Right ventricle myocardium inferior (tissue), 1 donor: ENCODE measurements at regions of chr3 and their contacts with region 1.

Region 1: GRCh38 chr3:187291001-187291511 is 481 bp downstream of the MASP1 start:
- DNase-seq: no peak
- ATAC-seq: peak; percentile 41

Region 2: DNA sequence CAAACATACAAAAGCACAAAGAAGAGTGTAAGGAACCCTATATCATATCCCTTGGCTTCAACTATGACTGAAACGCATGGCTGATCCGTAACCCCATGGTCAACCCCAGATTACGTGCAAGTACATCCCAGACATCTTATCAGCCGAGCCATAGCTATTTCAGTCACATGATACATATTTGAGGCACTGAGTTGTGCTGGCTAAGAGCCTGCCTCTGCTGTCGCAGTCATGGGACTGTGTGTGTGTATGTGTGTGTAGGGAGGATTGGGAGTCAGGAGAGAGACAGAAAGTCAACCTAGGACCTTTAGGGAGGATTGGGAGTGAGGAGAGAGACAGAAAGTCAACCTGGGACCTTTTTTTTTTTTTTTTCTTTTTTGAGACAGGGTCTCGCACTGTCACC is 352.3 kb before region 1 on chr3:
- intact Hi-C with region 1: no loop called
- DNase-seq: no peak
- ATAC-seq: peak; percentile 81

Region 3: DNA sequence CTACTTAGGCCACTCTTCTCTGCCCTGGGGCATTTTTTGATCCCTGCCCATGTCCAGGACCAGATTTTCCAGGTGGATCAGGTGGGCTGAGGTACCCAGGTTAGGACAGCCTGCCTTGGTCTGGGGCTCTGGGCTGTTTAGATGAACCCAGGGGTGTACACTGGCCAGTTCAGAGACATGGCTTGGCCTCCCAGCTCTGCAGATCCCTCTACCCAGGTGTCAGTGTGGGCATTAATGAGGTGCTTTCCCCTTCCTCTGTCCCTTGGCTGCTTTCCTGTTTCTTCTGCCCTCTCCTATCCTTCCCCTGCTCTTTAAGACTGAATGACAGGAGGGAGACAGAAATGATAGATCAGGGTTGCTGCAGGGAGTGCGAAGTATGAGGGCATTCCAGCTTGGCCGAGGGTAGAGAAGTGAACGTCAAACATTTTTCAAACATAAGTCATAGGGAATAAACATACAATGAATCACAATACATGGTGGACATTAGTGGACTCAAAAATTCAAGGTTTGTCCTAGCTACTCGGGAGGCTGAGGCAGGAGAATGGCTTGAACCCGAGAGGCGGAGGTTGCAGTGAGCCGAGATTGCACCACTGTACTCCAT is 63.3 kb before region 1 on chr3:
- intact Hi-C with region 1: loop called (anchors 5 kb)
- DNase-seq: no peak
- ATAC-seq: no peak

Region 4: DNA sequence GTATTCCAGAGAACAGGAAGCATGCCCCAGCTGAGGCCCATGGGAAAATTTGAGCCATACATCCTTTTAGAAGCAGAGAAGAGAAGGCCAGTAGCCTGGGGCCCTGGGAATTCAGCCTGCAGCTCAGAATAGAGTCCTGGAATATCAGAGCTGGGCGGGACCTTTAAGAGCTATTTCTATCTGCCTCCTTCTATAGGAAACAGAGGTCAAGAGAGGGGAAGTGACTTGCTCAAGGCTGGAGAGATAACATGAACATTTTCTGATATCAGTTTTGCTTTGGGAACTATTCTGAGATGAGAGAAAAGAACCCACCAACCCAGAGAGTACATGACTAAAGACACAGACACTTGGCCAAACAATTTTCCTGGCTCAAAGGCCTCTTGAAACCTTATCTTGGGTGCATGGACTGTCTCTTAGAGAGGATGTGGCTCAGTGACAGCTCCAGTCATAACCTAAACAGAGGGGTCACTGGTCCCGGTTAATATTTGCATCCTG is 25.5 kb before region 1 on chr3:
- intact Hi-C with region 1: loop called (anchors 1 kb)
- DNase-seq: no peak
- ATAC-seq: peak; percentile 84